ENCODE measurements at regions of chr15 and their contacts with region 1.

Region 1: GRCh38 chr15:39934397-39935071 is 619 bp downstream of the EIF2AK4 start:
- DNase-seq: no peak
- ATAC-seq: no peak
- H3K4me3 Mint-ChIP-seq: peak overlapping the region; percentile 96
- H3K27ac Mint-ChIP-seq: peak overlapping the region; percentile 50
- H3K4me1 Mint-ChIP-seq: peaks cover 32% of the 10 kb centered on the region
- H3K27me3 Mint-ChIP-seq: peaks cover 5% of the 10 kb centered on the region
- CTCF ChIP-seq: no peak

Region 2: DNA sequence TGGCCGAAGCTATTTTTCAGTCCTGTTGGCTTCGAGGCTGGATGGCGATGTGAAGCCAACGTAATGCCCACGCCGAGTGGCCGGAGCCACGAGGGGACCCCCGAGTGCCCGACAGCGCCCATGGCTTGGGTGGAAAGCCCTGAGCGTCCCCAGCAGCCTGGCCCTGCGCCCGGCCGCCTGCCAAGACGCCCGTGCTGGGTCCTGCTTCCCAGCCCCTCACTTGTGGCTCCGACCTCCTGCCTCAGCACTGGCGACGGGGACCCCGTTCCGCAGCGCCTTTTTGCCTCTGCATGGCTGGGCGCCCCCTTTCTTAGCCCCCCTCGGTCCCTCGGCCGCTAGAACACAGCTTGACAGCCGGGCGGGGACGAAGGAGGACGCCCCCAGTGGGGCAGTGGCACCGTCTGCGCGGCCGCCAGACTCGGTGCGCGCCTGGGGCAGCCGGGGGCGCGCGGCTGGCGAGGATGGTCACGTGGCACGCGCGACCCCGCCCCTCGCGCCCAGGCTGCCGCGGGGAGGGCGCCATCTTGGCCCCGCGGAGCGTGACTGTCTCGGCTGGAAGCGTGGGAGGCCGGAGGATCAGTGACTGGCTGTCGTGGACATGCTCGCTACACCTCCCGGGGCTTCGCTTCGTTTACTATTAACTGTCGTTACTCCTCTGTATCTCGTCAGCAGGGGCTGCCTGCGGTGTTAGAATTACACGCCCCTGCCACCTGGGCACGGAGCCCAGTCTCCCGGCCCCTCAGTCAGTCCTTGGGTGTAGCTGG is 13.8 kb before region 1 on chr15:
- CTCF ChIA-PET with region 1: interaction called, 4 read pairs
- POLR2A ChIA-PET with region 1: interaction called, 19 read pairs
- intact Hi-C with region 1: loop called (anchors 1 kb)
- DNase-seq: peak; percentile 84
- ATAC-seq: peak; percentile 90
- H3K4me3 Mint-ChIP-seq: peak overlapping the region; percentile 88
- H3K27ac Mint-ChIP-seq: peak overlapping the region; percentile 79
- H3K4me1 Mint-ChIP-seq: peaks cover 13% of the 10 kb centered on the region
- H3K27me3 Mint-ChIP-seq: peaks cover 15% of the 10 kb centered on the region
- CTCF ChIP-seq: no peak

Region 3: DNA sequence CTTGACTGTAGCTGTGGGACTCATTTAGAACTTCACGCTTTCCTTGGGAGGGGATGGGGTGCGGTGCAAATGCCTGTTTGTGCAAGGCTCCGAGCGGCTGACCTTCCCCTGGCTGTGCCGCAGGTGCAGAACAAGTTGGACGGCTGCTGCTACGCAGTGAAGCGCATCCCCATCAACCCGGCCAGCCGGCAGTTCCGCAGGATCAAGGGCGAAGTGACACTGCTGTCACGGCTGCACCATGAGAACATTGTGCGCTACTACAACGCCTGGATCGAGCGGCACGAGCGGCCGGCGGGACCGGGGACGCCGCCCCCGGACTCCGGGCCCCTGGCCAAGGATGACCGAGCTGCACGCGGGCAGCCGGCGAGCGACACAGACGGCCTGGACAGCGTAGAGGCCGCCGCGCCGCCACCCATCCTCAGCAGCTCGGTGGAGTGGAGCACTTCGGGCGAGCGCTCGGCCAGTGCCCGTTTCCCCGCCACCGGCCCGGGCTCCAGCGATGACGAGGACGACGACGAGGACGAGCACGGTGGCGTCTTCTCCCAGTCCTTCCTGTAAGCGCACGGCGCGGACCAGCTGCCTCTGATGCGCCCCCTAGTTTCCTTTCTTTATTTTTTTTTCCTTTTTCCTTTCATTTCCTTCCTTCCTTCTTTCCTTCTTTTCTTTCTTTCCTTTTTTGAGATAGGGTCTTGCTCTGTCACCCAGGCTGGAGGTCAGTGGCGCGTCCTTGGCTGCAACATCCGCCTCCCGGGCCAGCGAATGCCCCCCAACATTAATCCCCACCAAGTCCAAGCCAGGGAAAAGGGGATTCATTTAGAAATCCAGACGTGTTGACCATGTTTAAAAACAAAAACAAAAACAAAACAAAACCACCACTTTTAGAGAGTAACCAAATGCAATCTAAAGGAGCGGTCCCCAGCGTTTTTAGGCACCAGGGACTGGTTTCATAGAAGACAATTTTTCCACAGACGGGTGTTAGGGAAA is 42.0 kb after region 1 on chr15:
- CTCF ChIA-PET with region 1: no interaction called
- POLR2A ChIA-PET with region 1: no interaction called
- intact Hi-C with region 1: no loop called
- DNase-seq: peak; percentile 21
- ATAC-seq: peak; percentile 65
- H3K4me3 Mint-ChIP-seq: peak overlapping the region; percentile 74
- H3K27ac Mint-ChIP-seq: no peak overlapping the region
- H3K4me1 Mint-ChIP-seq: no peaks in the 10 kb centered on the region
- H3K27me3 Mint-ChIP-seq: no peaks in the 10 kb centered on the region
- CTCF ChIP-seq: no peak

Region 4: DNA sequence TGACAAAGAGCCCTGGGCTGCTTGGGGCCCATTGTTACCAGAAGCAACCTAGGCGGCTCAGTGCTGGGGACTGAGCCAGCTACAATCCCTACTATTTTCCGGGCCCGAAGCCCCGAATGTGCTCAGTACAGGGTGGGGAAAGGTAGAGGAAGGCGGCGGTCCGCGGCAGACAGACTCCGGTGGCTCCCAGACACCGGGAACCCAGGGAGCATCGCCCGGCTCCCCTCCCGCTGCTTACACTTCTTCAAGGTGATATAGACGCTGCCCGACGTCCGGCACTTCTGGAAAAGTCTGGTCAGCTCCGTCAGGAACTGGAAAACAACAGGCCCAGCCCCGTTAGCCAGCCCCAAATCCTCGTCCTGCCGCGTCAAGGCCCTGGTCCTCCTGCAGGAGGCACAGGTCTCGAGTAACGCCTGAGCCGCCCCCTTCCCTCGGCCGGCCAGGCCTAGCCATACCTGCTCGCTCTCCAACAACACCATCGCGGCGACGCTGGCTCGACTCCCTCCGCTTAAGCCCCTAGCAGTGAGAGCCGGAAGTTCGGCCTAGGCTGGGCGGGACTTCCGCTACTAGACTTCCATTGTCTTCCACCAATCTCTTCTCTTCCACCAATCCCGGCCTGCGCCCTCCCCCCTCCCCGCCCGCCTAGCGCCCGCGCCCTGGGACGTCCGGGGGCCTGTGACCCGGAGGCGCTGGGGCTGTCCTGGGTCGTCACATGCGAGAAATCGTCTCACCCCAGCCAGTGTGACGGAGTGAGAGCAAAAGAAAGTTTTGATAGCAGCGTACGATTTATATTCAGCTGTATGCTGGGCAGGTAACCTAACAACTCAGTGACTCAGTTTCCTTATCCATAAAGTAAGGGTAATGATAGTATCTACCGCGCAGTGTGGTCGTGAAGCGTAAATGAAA is 104.4 kb after region 1 on chr15 and contains the start of gene SRP14:
- CTCF ChIA-PET with region 1: no interaction called
- POLR2A ChIA-PET with region 1: no interaction called
- intact Hi-C with region 1: loop called (anchors 5 kb)
- DNase-seq: peak; percentile 89
- ATAC-seq: peak; percentile 97
- H3K4me3 Mint-ChIP-seq: peak within 1 kb of the TSS; percentile 99
- H3K27ac Mint-ChIP-seq: peak within 1 kb of the TSS; percentile 95
- H3K4me1 Mint-ChIP-seq: peaks cover 30% of the 10 kb centered on the region
- H3K27me3 Mint-ChIP-seq: no peaks in the 10 kb centered on the region
- CTCF ChIP-seq: no peak
- total RNA-seq, gene SRP14: 183 and 217 TPM in 2 replicates

Measured in activated B cell treated with CpG ODN at 0.5 μM for 24 hours (primary cell).